SK-MEL-5 (cell line): ENCODE measurements at regions of chr9 and their contacts with region 1.

Region 1: GRCh38 chr9:87336914-87337333 is 160.7 kb upstream of the DAPK1 start:
- DNase-seq: peak; percentile 86

Region 2: DNA sequence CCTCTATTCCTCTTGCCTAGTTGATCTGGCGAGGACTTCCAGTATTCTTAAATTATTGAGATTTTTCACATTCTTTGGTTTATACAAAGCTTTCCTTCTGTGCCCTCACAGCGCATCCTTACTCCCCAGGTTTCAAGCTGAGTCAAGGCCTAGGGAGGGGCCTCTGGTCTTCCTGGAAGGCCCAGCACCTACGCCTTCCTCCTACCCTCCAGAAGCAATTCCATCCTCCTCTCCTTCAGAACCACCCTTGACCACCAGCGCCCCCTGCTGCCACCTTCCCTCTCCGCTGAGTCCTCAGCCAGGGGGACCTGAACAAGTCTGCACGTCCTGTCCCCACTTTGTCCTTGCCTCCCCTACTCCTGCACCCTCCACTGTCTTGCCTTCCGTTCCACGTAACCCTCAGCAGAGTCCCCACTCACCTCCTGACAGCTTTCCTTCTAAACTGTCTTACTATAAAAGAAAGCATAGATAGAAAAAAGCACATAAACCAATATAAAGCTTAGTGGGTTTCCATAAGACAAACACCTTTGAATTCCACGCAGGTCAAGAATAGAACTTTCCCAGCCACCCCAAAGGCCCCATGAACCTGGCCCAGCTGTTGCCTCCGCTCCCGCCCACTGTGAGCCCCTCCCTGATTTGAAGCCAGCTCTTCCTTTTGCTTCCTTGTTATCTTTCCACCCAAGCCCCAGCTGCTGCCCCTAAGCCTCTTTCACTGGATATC is 326.0 kb after region 1 on chr9:
- in situ Hi-C with region 1: loop called (anchors 10 kb)
- DNase-seq: peak; percentile 82